ENCODE measurements at regions of chr3 and their contacts with region 1.

Region 1: DNA sequence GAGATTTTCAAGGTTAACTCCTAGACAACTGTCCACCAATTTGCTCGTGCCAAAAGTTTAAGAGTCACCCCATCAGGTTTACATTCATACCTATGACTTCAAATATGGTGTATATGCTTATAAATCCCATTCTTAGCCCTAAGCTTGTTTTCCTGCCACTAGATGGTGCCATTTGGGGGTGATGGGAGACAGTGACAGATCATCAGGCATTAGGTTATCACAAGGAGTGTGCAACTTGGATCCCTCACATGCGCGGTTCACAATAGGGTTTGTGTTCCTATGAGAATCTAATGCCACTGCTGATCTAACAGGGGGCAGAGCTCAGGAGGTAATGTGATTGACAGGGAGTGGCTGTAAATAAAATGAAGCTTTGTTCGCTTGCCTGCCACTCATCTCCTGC is 182.7 kb downstream of the CNTN6 start:
- DNase-seq: no peak
- ATAC-seq: no peak
- H3K4me3 Mint-ChIP-seq: no peak overlapping the region
- H3K27ac Mint-ChIP-seq: no peak overlapping the region
- H3K4me1 Mint-ChIP-seq: no peaks in the 10 kb centered on the region
- H3K27me3 Mint-ChIP-seq: no peaks in the 10 kb centered on the region
- CTCF ChIP-seq: no peak

Region 2: DNA sequence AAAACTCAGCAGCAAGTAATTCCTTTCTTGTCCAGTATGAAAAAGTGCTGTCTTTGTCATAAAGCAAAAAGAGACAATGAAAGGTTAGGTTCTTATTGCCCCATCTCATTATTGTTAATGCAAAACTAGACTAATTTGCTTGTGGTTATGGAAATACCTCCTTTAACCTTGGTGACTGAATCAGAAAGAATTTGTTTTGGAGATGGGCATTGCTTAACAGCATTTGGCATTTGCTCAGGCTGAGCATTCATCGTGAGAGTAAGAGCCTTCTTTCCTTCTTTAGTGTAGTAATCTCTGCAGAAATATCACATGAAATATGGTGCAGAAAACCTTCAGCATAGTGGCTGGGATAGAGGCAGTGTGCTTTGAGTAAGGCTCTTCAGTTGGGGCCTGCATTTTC is 79.5 kb before region 1 on chr3:
- CTCF ChIA-PET with region 1: no interaction called
- POLR2A ChIA-PET with region 1: no interaction called
- intact Hi-C with region 1: no loop called
- DNase-seq: no peak
- ATAC-seq: no peak
- H3K4me3 Mint-ChIP-seq: no peak overlapping the region
- H3K27ac Mint-ChIP-seq: no peak overlapping the region
- H3K4me1 Mint-ChIP-seq: no peaks in the 10 kb centered on the region
- H3K27me3 Mint-ChIP-seq: no peaks in the 10 kb centered on the region
- CTCF ChIP-seq: no peak

Region 3: GRCh38 chr3:1987980-1988379 is 712.5 kb after region 1 on chr3:
- CTCF ChIA-PET with region 1: no interaction called
- POLR2A ChIA-PET with region 1: no interaction called
- intact Hi-C with region 1: loop called (anchors 2 kb)
- DNase-seq: no peak
- ATAC-seq: no peak
- H3K4me3 Mint-ChIP-seq: no peak overlapping the region
- H3K27ac Mint-ChIP-seq: no peak overlapping the region
- H3K4me1 Mint-ChIP-seq: no peaks in the 10 kb centered on the region
- H3K27me3 Mint-ChIP-seq: no peaks in the 10 kb centered on the region
- CTCF ChIP-seq: no peak

Region 4: DNA sequence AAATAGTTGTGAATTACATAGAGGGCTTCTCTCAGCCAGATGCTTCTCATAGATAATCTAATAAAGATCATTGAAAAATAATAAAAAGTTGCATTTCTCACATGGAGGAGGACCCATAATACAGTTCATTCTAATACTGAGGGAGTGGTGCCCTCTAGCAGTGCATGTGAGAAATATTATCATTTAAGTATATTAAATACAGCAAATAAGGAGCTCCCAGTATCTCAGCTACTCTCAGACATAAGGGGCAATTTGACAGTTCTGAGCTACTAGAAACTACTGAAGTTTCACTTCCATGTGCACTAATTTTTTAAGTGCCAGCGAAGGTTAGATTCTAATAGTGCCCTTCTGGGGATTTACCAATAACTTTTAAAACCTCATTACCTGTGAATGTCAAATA is 1646.4 kb after region 1 on chr3:
- CTCF ChIA-PET with region 1: interaction called, 3 read pairs
- POLR2A ChIA-PET with region 1: no interaction called
- intact Hi-C with region 1: loop called (anchors 5 kb)
- DNase-seq: no peak
- ATAC-seq: peak; percentile 40
- H3K4me3 Mint-ChIP-seq: no peak overlapping the region
- H3K27ac Mint-ChIP-seq: no peak overlapping the region
- H3K4me1 Mint-ChIP-seq: peaks cover 2% of the 10 kb centered on the region
- H3K27me3 Mint-ChIP-seq: no peaks in the 10 kb centered on the region
- CTCF ChIP-seq: no peak

Region 5: DNA sequence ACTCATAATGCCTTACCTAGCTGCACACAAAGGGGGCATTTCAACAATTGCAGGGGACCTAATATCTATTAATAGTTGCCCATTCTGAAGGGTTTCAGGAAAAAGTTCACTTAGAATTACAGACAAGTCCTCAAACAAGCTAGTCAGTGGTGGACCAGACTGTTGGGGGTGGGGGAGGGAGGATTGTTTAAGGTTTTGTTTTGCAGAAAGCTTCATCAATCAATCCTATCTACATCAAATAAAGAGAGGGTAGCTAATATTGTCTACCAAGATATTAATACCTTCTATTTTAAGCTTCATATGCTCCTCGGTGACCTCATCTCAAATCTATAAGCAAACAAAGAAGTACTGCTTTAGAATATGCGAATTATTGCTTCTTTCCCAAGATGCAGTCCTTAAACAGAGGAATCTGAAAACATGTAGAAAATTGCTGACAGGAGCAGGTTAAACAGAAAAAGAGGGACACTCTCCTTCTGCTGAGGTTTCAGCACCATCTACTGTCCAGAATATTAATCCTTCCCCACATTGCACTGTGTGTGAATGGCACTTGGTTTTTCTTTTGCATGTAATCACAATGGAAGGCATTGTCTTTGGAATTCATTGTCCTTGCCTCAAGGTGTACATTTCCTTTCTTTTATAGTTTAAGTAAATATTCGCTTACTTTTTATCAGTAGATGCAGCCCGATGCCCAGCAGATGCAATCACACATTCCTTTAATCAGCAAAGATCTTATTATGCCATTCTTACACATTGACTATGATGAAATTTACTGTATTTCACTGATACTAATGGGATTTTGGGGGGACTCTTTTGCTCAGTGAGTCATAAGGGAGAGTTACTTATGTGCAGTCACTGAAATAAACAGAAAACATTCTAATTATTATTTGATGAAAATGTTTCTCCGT is 1739.9 kb after region 1 on chr3:
- CTCF ChIA-PET with region 1: no interaction called
- POLR2A ChIA-PET with region 1: no interaction called
- intact Hi-C with region 1: loop called (anchors 10 kb)
- DNase-seq: no peak
- ATAC-seq: no peak
- H3K4me3 Mint-ChIP-seq: no peak overlapping the region
- H3K27ac Mint-ChIP-seq: no peak overlapping the region
- H3K4me1 Mint-ChIP-seq: no peaks in the 10 kb centered on the region
- H3K27me3 Mint-ChIP-seq: peaks cover 8% of the 10 kb centered on the region
- CTCF ChIP-seq: no peak